GM12878 (cell line): ENCODE measurements at regions of chr2 and their contacts with region 1.

Region 1: GRCh38 chr2:30208452-30208851 is 22.9 kb upstream of the LBH start:
- DNase-seq: no peak
- ATAC-seq: peak; percentile 82
- H3K4me3 ChIP-seq: no peak overlapping the region
- H3K27ac ChIP-seq: no peak overlapping the region
- H3K4me1 ChIP-seq: peaks cover 2% of the 10 kb centered on the region
- H3K27me3 ChIP-seq: no peaks in the 10 kb centered on the region; a peak in 1 of 4 replicates
- CTCF ChIP-seq: peak; percentile 84 to 90 (median 88)
- EP300 ChIP-seq: no peak
- POLR2A ChIP-seq: no peak
- RAD21 ChIP-seq: peak; percentile 94

Region 2: DNA sequence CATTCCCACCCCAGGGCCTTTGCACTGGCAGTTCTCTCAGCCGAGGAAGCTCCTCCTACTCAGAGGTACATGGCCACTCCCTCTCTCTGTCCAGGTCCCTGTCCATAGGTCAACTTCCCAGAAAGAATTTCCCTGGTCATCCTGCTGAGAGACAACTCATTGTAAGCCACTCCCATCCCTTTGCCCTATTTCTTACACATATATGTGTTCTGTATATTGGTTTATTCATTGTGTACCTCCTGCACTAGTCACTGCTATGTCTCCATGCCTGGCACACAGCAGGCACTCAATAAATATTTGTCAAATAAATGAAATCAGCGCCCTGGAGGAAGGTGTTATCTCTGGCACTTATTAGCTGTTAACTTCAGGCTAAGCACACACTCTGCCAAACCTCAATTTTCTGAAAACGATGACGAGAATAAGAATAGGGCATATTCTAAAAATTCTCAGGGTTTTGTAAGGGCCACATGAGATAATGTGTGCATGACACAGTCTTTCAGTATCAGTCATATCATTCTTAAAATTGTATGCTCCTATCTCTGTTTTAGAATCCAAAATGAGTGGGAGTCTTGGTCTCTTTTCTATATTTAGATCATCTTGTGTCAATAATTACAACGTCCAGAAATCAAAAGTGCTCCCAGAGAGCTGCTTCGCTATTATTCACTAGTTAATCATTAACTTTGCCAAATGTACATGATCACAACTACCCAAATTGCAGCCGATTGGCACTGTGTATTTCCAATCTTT is 485.0 kb before region 1 on chr2:
- CTCF ChIA-PET with region 1: no interaction called
- POLR2A ChIA-PET with region 1: no interaction called
- RAD21 ChIA-PET with region 1: no interaction called
- SMC1A ChIA-PET with region 1: no interaction called
- in situ Hi-C with region 1: no loop called
- intact Hi-C with region 1: no loop called
- DNase-seq: peak; percentile 37
- ATAC-seq: peak; percentile 92
- H3K4me3 ChIP-seq: no peak overlapping the region
- H3K27ac ChIP-seq: no peak overlapping the region
- H3K4me1 ChIP-seq: no peaks in the 10 kb centered on the region; the same call in 1 of the 2 replicates
- H3K27me3 ChIP-seq: no peaks in the 10 kb centered on the region
- CTCF ChIP-seq: no peak
- EP300 ChIP-seq: peak; percentile 65 to 79; a peak in 3 of 4 replicates
- POLR2A ChIP-seq: no peak
- RAD21 ChIP-seq: no peak

Region 3: GRCh38 chr2:29865512-29865911 is 342.9 kb before region 1 on chr2:
- CTCF ChIA-PET with region 1: no interaction called
- POLR2A ChIA-PET with region 1: no interaction called
- RAD21 ChIA-PET with region 1: no interaction called
- SMC1A ChIA-PET with region 1: no interaction called
- in situ Hi-C with region 1: no loop called
- intact Hi-C with region 1: no loop called
- DNase-seq: peak; percentile 12
- ATAC-seq: peak; percentile 80
- H3K4me3 ChIP-seq: no peak overlapping the region
- H3K27ac ChIP-seq: no peak overlapping the region
- H3K4me1 ChIP-seq: peaks cover 6% of the 10 kb centered on the region
- H3K27me3 ChIP-seq: no peaks in the 10 kb centered on the region
- CTCF ChIP-seq: no peak
- EP300 ChIP-seq: no peak
- POLR2A ChIP-seq: no peak
- RAD21 ChIP-seq: no peak

Region 4: DNA sequence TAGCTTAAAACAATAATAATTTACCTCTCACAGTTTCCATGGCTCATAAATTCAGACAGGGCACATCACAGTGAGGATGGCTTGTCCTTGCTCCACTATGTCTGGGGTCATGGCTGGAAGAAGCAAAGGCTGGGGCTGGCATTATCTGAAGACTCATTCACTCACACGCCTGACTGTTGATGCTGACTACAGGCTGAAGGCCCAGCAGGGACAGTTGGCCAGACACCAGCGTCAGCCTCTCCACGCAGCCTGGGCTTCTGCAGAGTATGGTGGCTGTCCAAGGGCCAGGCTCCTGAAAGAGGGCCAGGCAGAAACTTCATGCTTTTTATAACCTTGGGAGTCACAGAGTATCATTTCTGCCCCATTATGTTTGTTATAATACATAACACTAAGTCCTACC is 28.2 kb before region 1 on chr2:
- CTCF ChIA-PET with region 1: no interaction called
- POLR2A ChIA-PET with region 1: no interaction called
- RAD21 ChIA-PET with region 1: no interaction called
- SMC1A ChIA-PET with region 1: no interaction called
- in situ Hi-C with region 1: no loop called
- intact Hi-C with region 1: no loop called
- DNase-seq: no peak
- ATAC-seq: no peak
- H3K4me3 ChIP-seq: no peak overlapping the region
- H3K27ac ChIP-seq: no peak overlapping the region
- H3K4me1 ChIP-seq: no peaks in the 10 kb centered on the region
- H3K27me3 ChIP-seq: no peaks in the 10 kb centered on the region; a peak in 1 of 4 replicates
- CTCF ChIP-seq: no peak
- EP300 ChIP-seq: no peak
- POLR2A ChIP-seq: no peak
- RAD21 ChIP-seq: no peak

Region 5: GRCh38 chr2:30231212-30231995 is 23.0 kb after region 1 on chr2 and contains the start of gene LBH:
- CTCF ChIA-PET with region 1: interaction called, 207 read pairs
- POLR2A ChIA-PET with region 1: interaction called, 12 read pairs
- RAD21 ChIA-PET with region 1: interaction called, 322 read pairs
- SMC1A ChIA-PET with region 1: interaction called, 444 read pairs
- in situ Hi-C with region 1: no loop called
- intact Hi-C with region 1: no loop called
- DNase-seq: peak; percentile 56
- ATAC-seq: peak; percentile 59
- H3K4me3 ChIP-seq: peak within 1 kb of the TSS; percentile 80
- H3K27ac ChIP-seq: peak within 1 kb of the TSS; percentile 58
- H3K4me1 ChIP-seq: peaks cover 47% of the 10 kb centered on the region
- H3K27me3 ChIP-seq: no peaks in the 10 kb centered on the region
- CTCF ChIP-seq: peak in 1 of 3 experiments; percentile 31; a peak in 1 of 6 replicates
- EP300 ChIP-seq: peak in 1 of 2 experiments; percentile 27; a peak in 1 of 4 replicates
- POLR2A ChIP-seq: peak; percentile 99
- RAD21 ChIP-seq: peak; percentile 24; the same call in 1 of the 2 replicates
- polyA plus RNA-seq, gene LBH: 9.3 to 26.5 TPM

Region 6: GRCh38 chr2:30421604-30422443 is 213.4 kb after region 1 on chr2:
- CTCF ChIA-PET with region 1: interaction called, 14 read pairs
- POLR2A ChIA-PET with region 1: interaction called, 3 read pairs
- RAD21 ChIA-PET with region 1: interaction called, 8 read pairs
- SMC1A ChIA-PET with region 1: interaction called, 31 read pairs
- in situ Hi-C with region 1: no loop called
- intact Hi-C with region 1: no loop called
- DNase-seq: peak; percentile 28
- ATAC-seq: peak; percentile 77
- H3K4me3 ChIP-seq: 0 out of 2 replicates have a peak overlapping the region, but pooled peaks have one; percentile 17
- H3K27ac ChIP-seq: peak overlapping the region; percentile 6; the same call in 1 of the 2 replicates
- H3K4me1 ChIP-seq: peaks cover 25% of the 10 kb centered on the region
- H3K27me3 ChIP-seq: no peaks in the 10 kb centered on the region
- CTCF ChIP-seq: no peak
- EP300 ChIP-seq: no peak
- POLR2A ChIP-seq: no peak
- RAD21 ChIP-seq: no peak

Region 7: DNA sequence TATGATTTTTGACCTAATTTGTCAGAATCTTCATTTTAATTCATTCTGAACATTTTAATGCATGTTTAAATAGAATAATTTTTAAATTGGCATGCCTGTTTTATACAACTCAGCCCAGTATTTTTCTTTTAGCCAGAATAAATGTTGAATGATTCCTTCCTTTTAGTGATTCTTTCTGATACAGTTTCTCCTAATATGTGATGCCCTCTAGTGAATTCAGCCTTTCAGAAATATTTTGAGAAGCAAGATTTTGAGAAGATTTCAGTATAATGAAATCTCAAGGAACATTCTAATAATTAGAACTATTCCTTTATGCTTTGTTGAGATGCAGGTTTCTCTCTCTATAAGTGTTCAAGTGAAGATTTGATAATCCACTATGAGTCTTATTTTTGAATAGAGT is 267.1 kb after region 1 on chr2:
- CTCF ChIA-PET with region 1: interaction called, 87 read pairs
- POLR2A ChIA-PET with region 1: no interaction called
- RAD21 ChIA-PET with region 1: interaction called, 47 read pairs
- SMC1A ChIA-PET with region 1: interaction called, 83 read pairs
- in situ Hi-C with region 1: no loop called
- intact Hi-C with region 1: no loop called
- DNase-seq: no peak
- ATAC-seq: no peak
- H3K4me3 ChIP-seq: no peak overlapping the region
- H3K27ac ChIP-seq: no peak overlapping the region
- H3K4me1 ChIP-seq: peaks cover 3% of the 10 kb centered on the region; the same call in 1 of the 2 replicates
- H3K27me3 ChIP-seq: no peaks in the 10 kb centered on the region
- CTCF ChIP-seq: no peak; a peak in 1 of 6 replicates
- EP300 ChIP-seq: no peak
- POLR2A ChIP-seq: no peak
- RAD21 ChIP-seq: peak; percentile 35

Region 8: GRCh38 chr2:30631051-30631671 is 422.7 kb after region 1 on chr2:
- CTCF ChIA-PET with region 1: interaction called, 6 read pairs
- POLR2A ChIA-PET with region 1: no interaction called
- RAD21 ChIA-PET with region 1: interaction called, 3 read pairs
- SMC1A ChIA-PET with region 1: interaction called, 15 read pairs
- in situ Hi-C with region 1: no loop called
- intact Hi-C with region 1: no loop called
- DNase-seq: peak; percentile 48
- ATAC-seq: peak; percentile 56
- H3K4me3 ChIP-seq: no peak overlapping the region
- H3K27ac ChIP-seq: no peak overlapping the region
- H3K4me1 ChIP-seq: peaks cover 25% of the 10 kb centered on the region
- H3K27me3 ChIP-seq: no peaks in the 10 kb centered on the region
- CTCF ChIP-seq: no peak
- EP300 ChIP-seq: no peak
- POLR2A ChIP-seq: no peak
- RAD21 ChIP-seq: no peak

Region 9: GRCh38 chr2:30702694-30703093 is 494.2 kb after region 1 on chr2:
- CTCF ChIA-PET with region 1: interaction called, 334 read pairs
- POLR2A ChIA-PET with region 1: interaction called, 5 read pairs
- RAD21 ChIA-PET with region 1: interaction called, 195 read pairs
- SMC1A ChIA-PET with region 1: interaction called, 100 read pairs
- in situ Hi-C with region 1: loop called (anchors 5 kb)
- intact Hi-C with region 1: loop called (anchors 1 kb)
- DNase-seq: no peak
- ATAC-seq: no peak
- H3K4me3 ChIP-seq: no peak overlapping the region
- H3K27ac ChIP-seq: no peak overlapping the region
- H3K4me1 ChIP-seq: no peaks in the 10 kb centered on the region
- H3K27me3 ChIP-seq: no peaks in the 10 kb centered on the region
- CTCF ChIP-seq: no peak
- EP300 ChIP-seq: no peak
- POLR2A ChIP-seq: no peak
- RAD21 ChIP-seq: no peak